Head of caudate nucleus (tissue), 42 donors: ENCODE measurements at regions of chr19 and their contacts with region 1.

Region 1: DNA sequence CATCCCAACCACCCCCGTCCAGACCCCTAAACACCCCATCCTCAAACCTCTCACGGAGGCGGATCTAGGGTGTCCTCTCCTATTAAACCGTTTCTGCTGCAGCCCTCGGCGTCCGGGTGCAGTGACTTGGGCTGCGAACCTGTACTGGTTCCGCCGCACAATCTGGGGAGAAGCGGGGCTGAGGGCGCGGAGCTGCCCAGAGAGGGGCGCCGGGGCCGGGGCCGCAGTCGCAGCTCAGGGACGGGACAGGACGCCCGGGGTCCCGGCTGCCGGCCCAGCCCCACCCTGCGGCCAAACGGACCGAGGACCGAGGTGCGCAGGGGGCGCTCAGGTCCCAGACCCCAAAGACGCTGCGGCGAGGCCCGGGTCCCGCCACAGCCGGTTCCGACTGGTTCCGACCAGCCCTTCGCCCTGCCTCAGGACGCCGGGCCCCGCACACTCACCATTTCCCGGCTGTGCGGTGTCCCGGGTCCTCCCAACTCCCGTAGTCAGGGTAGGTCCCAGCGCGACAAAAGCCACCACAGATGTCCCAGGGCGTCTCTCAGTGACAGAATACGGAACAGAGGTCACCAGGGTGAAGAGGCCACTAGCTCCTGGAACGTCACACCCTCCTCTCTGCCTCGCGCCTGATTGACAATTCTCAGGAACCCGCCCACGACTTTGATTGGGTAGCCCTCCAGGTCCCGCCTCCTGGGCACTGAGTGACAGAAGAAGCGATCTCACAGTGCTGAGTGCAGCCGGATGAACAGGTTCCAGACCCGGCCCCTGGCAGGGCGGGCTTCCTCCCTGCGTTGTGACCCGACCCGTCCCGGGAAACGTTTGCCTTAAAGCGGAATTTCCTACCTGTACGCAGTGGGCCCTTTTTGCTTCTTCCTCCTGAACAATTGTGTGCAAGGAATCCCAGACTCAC is at the start of gene ZNF44:
- DNase-seq: peak; percentile 95 to 100 (median 99)

Region 2: GRCh38 chr19:12365236-12366162 is 71.0 kb after region 1 on chr19 and contains the start of gene ZNF442:
- intact Hi-C with region 1: loop called (anchors 10 kb)
- DNase-seq: peak; percentile 87 to 99 (median 97)